Cardiac septum (tissue), 1 donor: ENCODE measurements at regions of chr10 and their contacts with region 1.

Region 1: GRCh38 chr10:62816331-62817120 is at the start of gene EGR2:
- DNase-seq: peak; percentile 98
- total RNA-seq, gene EGR2: 4.8 TPM

Region 2: GRCh38 chr10:62437696-62438095 is 378.8 kb before region 1 on chr10:
- intact Hi-C with region 1: loop called (anchors 5 kb)
- DNase-seq: no peak

Region 3: DNA sequence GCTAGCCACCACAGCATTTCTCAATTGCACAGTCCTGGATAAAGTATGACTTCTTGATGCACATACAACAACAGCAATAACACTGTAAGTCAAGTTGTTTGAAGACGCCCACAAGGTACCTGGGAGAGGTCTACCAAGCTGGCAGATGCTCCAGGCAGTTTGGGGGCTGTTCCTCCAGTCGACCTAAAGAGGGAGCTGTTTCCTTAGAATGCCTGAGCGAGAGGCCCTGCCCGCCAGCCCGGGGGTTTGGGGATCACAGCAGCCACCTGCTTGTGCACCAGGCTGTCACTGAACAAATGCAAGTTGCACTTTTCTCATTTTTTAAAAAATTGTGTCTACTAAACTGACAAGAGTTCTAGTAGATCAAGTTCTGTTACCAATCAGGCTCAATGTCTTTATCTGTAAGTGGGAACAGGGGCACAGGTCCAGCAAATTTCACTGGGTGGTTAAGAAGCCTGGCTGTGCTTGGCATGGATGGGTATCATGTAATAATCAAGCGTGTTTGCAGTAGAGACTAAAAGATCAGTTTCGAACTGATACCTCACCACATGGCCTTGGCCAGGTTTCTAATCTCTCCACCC is 205.8 kb before region 1 on chr10:
- intact Hi-C with region 1: loop called (anchors 2 kb)
- DNase-seq: peak; percentile 81

Region 4: DNA sequence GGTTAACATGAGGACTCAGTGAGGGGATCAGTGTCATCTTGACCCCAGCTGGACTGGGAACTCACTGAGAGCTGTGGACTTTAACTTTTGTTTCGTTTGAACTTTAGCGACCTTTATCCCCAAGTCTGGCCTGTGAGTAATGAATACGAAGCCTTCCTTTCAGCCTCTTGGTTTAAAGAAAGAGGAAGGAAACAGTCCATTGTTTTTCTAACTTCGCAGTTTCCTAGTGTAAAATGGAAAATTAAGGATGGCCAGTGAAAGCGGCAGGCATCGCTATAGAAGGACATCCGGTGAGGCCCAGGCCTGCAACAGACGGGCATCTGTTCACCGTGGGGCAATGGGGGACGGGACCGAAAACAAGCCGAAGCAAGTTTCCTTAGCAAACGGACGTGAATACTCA is 56.1 kb before region 1 on chr10:
- intact Hi-C with region 1: loop called (anchors 5 kb)
- DNase-seq: no peak

Region 5: GRCh38 chr10:62992145-62992721 is 175.7 kb after region 1 on chr10:
- intact Hi-C with region 1: no loop called
- DNase-seq: no peak

Region 6: GRCh38 chr10:63157845-63158624 is 341.5 kb after region 1 on chr10:
- intact Hi-C with region 1: loop called (anchors 5 kb)
- DNase-seq: no peak